ENCODE measurements at regions of chr20 and their contacts with region 1.

Region 1: DNA sequence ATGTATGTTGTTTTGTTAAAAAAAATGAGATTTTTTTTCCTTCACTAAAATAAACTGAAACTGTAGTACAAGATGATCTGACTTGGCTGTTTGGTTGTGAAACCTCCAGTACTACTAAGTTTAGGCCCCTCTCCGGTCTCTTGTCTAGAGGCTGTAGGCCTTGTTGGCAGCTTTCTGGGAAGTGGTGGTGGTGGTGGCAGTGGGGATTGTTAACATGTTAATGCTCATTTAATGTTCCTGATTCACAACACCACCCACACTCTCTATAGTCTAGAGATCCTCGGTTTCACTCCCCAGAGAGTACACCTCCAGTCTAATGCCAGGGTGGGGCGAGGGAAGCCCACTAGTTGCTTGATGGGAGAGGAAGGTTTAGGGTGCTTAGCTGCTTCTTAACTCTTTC is 24.1 kb downstream of the STK4 start:
- DNase-seq: peak; percentile 85
- H3K4me3 Mint-ChIP-seq: peak overlapping the region; percentile 74
- H3K27ac Mint-ChIP-seq: peak overlapping the region; percentile 96
- H3K4me1 Mint-ChIP-seq: peaks cover 72% of the 10 kb centered on the region
- H3K27me3 Mint-ChIP-seq: no peaks in the 10 kb centered on the region

Region 2: DNA sequence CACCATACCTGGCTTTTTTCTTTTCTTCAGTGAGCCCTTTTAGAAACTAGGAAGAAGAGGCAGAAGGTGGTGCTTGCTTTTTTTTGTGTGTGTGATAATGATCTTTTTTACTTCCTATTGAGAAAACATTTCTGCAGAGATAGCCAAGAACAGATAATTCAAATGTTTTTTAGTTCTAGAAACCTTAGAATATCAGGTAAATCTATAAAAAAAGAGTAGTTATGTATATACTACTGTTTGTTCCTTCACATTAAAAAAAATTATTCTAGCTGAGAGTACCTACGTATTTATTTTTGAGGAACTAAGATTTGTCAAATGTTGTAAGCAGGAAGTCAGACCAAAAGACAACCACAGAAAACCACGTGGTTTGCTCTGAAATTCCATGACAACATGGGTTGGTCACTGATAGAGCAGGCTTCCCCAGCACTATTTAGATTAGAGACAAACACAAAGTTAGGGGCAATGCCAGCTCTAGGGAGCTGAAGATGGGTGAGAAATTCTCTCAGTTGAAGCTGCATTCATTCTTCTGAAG is 11.3 kb before region 1 on chr20:
- CTCF ChIA-PET with region 1: interaction called, 3 read pairs
- POLR2A ChIA-PET with region 1: interaction called, 5 read pairs
- intact Hi-C with region 1: loop called (anchors 1 kb)
- DNase-seq: peak; percentile 77
- H3K4me3 Mint-ChIP-seq: peak overlapping the region; percentile 50
- H3K27ac Mint-ChIP-seq: peak overlapping the region; percentile 88
- H3K4me1 Mint-ChIP-seq: peaks cover 79% of the 10 kb centered on the region
- H3K27me3 Mint-ChIP-seq: no peaks in the 10 kb centered on the region

Region 3: GRCh38 chr20:45036044-45036755 is 45.8 kb after region 1 on chr20:
- CTCF ChIA-PET with region 1: no interaction called
- POLR2A ChIA-PET with region 1: no interaction called
- intact Hi-C with region 1: loop called (anchors 2 kb)
- DNase-seq: peak; percentile 83
- H3K4me3 Mint-ChIP-seq: no peak overlapping the region
- H3K27ac Mint-ChIP-seq: peak overlapping the region; percentile 92
- H3K4me1 Mint-ChIP-seq: peaks cover 78% of the 10 kb centered on the region
- H3K27me3 Mint-ChIP-seq: no peaks in the 10 kb centered on the region